Sciatic nerve (tissue), 2 donors: ENCODE measurements at regions of chr3 and their contacts with region 1.

Region 1: DNA sequence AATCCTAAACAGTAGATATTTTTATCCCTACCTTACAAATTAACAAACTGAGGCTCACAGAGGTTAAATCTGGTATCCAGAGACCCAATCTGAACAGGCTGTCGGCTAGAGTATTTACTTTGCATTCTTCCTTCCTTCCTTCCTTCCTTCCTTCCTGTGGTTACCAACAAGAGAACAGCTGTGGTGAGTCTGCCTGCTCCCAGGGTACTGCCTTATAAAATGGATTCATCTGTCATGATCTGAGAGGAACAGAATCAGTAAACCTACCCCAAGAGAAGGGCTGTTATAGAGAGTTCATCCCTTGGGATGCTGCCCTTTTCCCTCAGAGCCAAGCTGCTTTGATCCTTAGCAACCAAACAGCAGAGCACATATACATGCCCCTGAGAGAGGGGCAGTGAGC is 3.6 kb downstream of the GADL1 start:
- DNase-seq: no peak
- ATAC-seq: no peak

Region 2: GRCh38 chr3:30934208-30934550 is 43.3 kb after region 1 on chr3:
- intact Hi-C with region 1: no loop called
- DNase-seq: no peak
- ATAC-seq: peak; percentile 80

Region 3: DNA sequence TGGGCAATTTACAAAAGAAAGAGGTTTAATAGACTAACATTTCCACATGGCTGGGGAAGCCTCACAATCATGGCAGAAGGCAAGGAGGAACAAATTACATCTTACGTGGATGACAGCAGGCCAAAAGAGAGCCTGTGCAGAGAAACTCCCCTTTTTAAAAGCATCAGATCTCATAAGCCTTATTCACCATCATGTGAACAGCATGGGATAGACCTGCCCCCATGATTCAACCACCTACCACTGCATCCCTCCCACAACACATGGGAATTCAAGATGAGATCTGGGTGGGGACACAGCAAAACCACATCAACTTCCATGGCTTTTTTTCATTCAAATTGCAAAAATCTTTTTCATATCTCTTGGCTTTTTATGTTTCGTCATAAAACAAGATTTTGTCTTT is 71.2 kb after region 1 on chr3:
- intact Hi-C with region 1: loop called (anchors 2 kb)
- DNase-seq: no peak
- ATAC-seq: no peak

Region 4: GRCh38 chr3:31232055-31233025 is 341.4 kb after region 1 on chr3:
- intact Hi-C with region 1: no loop called
- DNase-seq: no peak
- ATAC-seq: no peak